ENCODE measurements at regions of chr1 and their contacts with region 1.

Region 1: GRCh38 chr1:243477731-243478290 is 222.0 kb downstream of the SDCCAG8 start:
- DNase-seq: peak in 2 of 14 experiments; percentile 28 to 40
- ATAC-seq: no peak
- H3K4me3 ChIP-seq: no peak overlapping the region
- H3K4me3 Mint-ChIP-seq: no peak overlapping the region
- H3K27ac ChIP-seq: no peak overlapping the region
- H3K27ac Mint-ChIP-seq: no peak overlapping the region
- H3K4me1 ChIP-seq: peaks cover 9% of the 10 kb centered on the region
- H3K4me1 Mint-ChIP-seq: peaks cover 29% of the 10 kb centered on the region
- H3K27me3 ChIP-seq: no peaks in the 10 kb centered on the region
- H3K27me3 Mint-ChIP-seq: no peaks in the 10 kb centered on the region
- CTCF ChIP-seq: no peak

Region 2: DNA sequence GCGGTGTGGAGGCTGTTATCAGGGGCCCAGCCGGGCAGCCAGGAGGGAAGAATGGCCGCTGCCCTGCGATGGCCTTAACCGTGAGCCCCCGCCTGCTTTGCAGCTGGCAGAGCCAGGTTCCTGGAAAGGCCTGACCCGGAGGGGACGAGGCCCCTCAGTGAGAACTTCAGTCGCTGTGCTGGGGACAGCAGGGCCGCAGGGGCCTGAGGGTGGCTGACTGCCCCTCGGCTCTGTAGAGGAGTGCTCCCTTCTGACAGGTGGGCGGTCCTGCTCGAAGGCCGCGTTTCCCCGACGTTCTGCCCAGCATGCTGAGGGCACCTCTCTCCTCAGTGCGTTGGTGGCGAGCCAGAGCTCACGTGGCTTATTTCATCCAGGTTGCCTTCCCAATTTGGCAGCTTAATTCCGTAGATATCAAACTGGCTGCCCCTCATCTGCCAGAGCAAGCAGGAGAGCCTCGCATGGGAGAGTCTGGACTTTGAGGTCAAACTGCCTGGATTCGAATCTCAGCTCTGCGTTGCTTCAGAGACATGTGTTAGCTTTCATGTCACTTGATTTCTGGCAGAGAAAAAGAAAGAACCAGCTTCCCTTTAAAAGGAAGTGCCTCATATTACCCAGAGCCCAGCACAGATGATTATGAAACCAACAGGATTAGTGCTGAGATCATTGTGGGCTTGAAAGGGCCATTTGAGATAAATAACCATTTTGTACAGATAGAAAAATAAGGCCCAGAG is 17.8 kb after region 1 on chr1:
- CTCF ChIA-PET with region 1: no interaction called
- POLR2A ChIA-PET with region 1: no interaction called
- intact Hi-C with region 1: no loop called
- DNase-seq: peak in 2 of 14 experiments; percentile 23 to 26
- ATAC-seq: no peak
- H3K4me3 ChIP-seq: no peak overlapping the region
- H3K4me3 Mint-ChIP-seq: no peak overlapping the region
- H3K27ac ChIP-seq: no peak overlapping the region
- H3K27ac Mint-ChIP-seq: no peak overlapping the region
- H3K4me1 ChIP-seq: peaks cover 6% of the 10 kb centered on the region
- H3K4me1 Mint-ChIP-seq: no peaks in the 10 kb centered on the region
- H3K27me3 ChIP-seq: no peaks in the 10 kb centered on the region
- H3K27me3 Mint-ChIP-seq: no peaks in the 10 kb centered on the region
- CTCF ChIP-seq: no peak

Region 3: DNA sequence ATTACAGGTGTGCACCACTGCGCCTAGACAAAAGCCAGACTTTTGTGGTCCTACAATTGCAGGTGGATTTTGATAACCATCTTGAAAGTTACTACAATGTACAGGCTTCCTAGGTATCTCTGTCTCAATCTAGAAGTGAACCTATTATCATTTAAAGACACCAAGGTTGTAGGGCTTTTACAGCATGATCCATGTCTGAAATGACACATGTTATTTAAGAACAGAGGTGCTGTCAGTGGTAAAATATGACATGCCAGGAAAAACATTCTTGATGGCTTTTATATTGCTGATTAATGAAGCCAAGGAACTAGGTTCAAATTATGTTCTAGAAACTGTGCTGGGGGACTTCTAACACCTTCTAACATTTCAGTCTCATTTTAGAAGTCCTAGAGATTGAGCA is 31.1 kb after region 1 on chr1:
- CTCF ChIA-PET with region 1: no interaction called
- POLR2A ChIA-PET with region 1: no interaction called
- intact Hi-C with region 1: loop called in 1 of 2 experiments (anchors 1 kb)
- DNase-seq: no peak
- ATAC-seq: no peak
- H3K4me3 ChIP-seq: no peak overlapping the region
- H3K4me3 Mint-ChIP-seq: no peak overlapping the region
- H3K27ac ChIP-seq: no peak overlapping the region
- H3K27ac Mint-ChIP-seq: peak overlapping the region; percentile 91
- H3K4me1 ChIP-seq: peaks cover 15% of the 10 kb centered on the region
- H3K4me1 Mint-ChIP-seq: peaks cover 42% of the 10 kb centered on the region
- H3K27me3 ChIP-seq: no peaks in the 10 kb centered on the region
- H3K27me3 Mint-ChIP-seq: no peaks in the 10 kb centered on the region
- CTCF ChIP-seq: no peak